GM10248 (cell line): ENCODE measurements at regions of chr12 and their contacts with region 1.

Region 1: GRCh38 chr12:95072900-95073697 is at the start of gene NR2C1:
- DNase-seq: peak; percentile 99
- CTCF ChIP-seq: no peak

Region 2: DNA sequence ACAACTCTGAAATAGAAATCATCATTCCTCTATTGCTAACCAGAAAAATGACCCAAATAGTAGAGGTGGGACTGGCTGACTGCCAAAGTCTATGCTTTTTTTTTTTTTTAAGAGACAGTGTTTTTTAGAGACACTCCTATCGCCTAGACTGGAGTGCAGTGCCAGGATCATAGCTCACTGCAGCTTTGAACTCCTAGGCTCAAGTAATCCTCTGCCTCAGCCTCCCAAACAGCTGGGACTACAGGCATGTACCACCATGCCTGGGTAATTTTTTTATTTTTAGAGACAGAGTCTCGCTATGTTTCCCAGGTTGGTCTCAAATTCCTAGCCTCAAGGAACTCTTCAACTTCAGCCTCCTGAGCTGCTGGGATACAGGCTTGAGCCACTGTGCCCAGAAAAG is 18.9 kb before region 1 on chr12:
- CTCF ChIA-PET with region 1: interaction called, 11 read pairs
- POLR2A ChIA-PET with region 1: interaction called, 4 read pairs
- DNase-seq: no peak
- CTCF ChIP-seq: no peak

Region 3: GRCh38 chr12:95083938-95084337 is 10.8 kb after region 1 on chr12:
- CTCF ChIA-PET with region 1: interaction called, 18 read pairs
- POLR2A ChIA-PET with region 1: no interaction called
- DNase-seq: no peak
- CTCF ChIP-seq: no peak

Region 4: GRCh38 chr12:95102916-95103671 is 30.0 kb after region 1 on chr12:
- CTCF ChIA-PET with region 1: interaction called, 22 read pairs
- POLR2A ChIA-PET with region 1: no interaction called
- DNase-seq: peak; percentile 68
- CTCF ChIP-seq: no peak